PC-9 (cell line): ENCODE measurements at regions of chr1 and their contacts with region 1.

Region 1: DNA sequence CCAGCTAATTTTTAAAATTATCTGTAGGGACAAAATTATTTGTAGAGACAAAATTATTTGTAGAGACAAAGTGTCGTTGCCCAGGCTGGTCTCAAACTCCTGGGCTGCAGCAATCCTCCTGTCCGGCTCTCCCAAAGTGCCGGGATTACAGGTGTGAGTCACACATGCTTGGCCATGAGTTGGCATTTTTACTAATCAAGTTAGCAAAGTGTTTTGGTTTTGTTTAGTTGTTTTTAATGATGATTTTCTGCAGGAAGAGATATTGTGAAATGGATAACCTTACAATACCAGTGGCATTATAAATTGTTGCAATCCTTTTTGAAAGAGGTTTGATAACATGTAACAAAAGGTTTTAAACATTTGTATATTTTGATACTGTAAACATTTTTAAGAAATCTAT is 65.3 kb upstream of the MAGI3 start:
- DNase-seq: peak; percentile 56 to 92
- H3K4me3 ChIP-seq: 0 out of 2 replicates have a peak overlapping the region, but pooled peaks have one; percentile 4
- H3K27ac ChIP-seq: peak overlapping the region; percentile 88
- H3K4me1 ChIP-seq: peaks cover 54% of the 10 kb centered on the region
- H3K27me3 ChIP-seq: no peaks in the 10 kb centered on the region
- CTCF ChIP-seq: no peak

Region 2: DNA sequence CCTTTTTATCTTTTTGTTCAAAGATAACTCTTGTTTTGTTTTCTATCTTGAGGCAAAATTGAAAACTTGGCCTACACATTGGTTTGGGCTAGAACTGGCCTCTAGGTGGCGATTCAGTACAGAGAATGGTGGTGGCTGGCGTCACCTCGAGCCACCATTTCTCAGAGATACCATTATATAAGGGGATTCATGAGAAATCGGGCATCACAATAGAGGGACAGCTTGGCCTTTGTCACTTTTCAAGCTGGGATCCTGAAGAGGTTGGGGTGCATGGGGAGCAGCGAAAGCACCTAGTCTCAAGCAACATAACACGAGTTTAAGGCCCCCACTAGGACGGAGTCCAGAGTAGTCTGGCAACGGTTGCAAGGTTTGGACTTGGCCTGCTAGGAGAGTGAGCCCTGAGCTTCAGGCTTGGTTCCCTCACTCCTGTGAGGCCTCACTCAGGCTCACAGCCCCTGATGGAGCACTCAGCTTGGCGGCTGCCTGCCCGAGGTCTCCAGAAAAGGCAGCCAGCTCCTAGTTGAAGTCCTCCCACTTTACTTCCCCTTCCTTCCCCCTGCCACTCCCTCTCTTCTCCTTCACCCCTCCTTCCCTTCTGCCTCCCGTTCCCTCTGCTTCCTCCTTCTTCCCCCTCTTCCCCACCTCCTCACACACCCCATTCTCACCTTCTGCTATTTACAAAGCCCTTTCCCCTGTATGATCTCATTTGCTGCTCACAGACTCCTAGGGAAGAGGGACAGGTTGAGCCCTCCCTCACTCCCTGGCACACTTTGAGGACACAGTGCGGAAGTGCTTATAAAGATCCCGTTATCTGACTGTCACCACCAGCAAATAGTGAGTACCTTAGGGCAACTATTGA is 184.2 kb before region 1 on chr1:
- CTCF ChIA-PET with region 1: no interaction called
- POLR2A ChIA-PET with region 1: interaction called, 4 read pairs
- intact Hi-C with region 1: loop called (anchors 5 kb)
- DNase-seq: peak; percentile 58 to 61
- H3K4me3 ChIP-seq: no peak overlapping the region
- H3K27ac ChIP-seq: peak overlapping the region; percentile 31; the same call in 1 of the 2 replicates
- H3K4me1 ChIP-seq: peaks cover 16% of the 10 kb centered on the region
- H3K27me3 ChIP-seq: no peaks in the 10 kb centered on the region
- CTCF ChIP-seq: peak; percentile 99

Region 3: DNA sequence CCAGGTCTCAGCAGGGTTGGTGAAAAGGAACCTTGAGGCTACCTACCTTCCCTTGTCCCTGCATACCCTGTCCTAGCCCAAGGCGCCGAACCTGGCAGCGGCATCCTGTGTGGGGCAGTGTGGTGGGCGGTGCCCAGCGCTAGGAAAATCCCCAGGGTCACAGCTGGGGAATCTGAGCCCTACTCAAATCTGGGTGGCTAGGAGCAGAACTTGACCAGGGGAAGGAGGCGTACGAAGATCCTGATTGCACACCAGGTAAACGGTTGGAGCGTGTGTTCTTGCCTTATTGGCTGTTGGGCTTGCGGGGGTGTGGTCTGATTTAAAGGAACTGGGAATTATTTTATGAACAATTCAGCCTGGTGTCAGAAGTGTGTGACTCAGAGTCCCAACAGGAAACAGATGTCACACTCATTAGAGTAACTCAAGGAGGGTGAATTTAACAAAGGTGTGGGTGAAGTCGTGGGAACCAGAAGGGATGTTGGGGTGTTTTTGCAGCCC is 133.4 kb before region 1 on chr1:
- CTCF ChIA-PET with region 1: no interaction called
- POLR2A ChIA-PET with region 1: no interaction called
- intact Hi-C with region 1: loop called (anchors 10 kb)
- DNase-seq: peak; percentile 78 to 99
- H3K4me3 ChIP-seq: peak overlapping the region; percentile 48
- H3K27ac ChIP-seq: peak overlapping the region; percentile 86
- H3K4me1 ChIP-seq: peaks cover 25% of the 10 kb centered on the region
- H3K27me3 ChIP-seq: no peaks in the 10 kb centered on the region
- CTCF ChIP-seq: no peak

Region 4: DNA sequence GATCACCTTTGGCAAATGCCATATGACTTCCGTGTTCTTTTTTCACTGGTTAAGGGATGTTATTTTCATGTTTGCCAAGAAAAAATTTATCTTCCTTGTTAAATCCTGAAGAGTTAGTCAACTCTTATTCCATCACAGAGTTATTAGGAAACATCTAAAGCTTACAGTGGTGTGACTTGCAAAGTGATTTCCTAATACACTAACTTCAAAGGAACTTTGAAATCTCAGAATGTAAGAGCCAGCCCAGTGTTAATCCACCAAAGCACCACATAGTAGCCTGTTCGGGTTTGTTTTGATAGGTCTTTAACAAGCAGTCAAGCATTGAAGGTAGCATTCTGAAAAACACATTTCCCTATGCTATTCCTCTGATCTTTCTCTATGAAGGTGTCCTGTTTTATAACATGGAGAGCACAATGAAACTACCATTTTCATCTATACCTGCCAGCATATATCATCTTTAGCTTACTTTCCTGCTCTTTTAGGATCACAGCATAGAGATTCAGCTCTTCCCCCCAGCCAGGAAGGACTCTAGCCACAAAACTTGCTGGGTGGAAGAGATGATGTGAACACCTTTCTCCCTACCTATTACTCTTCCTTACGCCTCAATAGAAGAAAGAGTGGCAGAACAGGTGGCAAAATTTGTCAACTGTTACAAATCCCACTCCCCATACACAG is 17.1 kb before region 1 on chr1:
- CTCF ChIA-PET with region 1: no interaction called
- POLR2A ChIA-PET with region 1: no interaction called
- intact Hi-C with region 1: loop called (anchors 2 kb)
- DNase-seq: peak; percentile 10 to 99
- H3K4me3 ChIP-seq: peak overlapping the region; percentile 25; the same call in 1 of the 2 replicates
- H3K27ac ChIP-seq: peak overlapping the region; percentile 95
- H3K4me1 ChIP-seq: peaks cover 27% of the 10 kb centered on the region
- H3K27me3 ChIP-seq: no peaks in the 10 kb centered on the region
- CTCF ChIP-seq: no peak

Region 5: DNA sequence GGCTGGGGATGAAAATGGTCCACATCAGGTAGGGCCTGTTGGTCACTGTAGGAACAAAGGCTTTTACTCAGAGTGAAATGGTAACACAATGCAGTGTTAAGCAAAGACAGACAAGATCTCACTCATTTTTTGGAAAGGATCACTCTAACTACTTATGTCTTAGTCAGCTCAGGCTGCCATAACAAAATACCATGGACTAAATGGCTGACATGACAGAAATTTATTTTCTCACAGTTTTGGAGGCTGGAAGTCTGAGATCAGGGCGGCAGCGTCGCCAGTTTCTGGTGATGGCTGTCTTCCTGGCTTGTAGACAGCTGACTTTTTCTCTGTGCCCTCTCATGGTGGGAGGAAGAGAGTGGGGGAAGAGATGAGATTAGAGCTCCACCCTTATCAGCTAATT is 55.0 kb after region 1 on chr1:
- CTCF ChIA-PET with region 1: no interaction called
- POLR2A ChIA-PET with region 1: no interaction called
- intact Hi-C with region 1: no loop called
- DNase-seq: no peak
- H3K4me3 ChIP-seq: no peak overlapping the region
- H3K27ac ChIP-seq: no peak overlapping the region
- H3K4me1 ChIP-seq: no peaks in the 10 kb centered on the region
- H3K27me3 ChIP-seq: no peaks in the 10 kb centered on the region
- CTCF ChIP-seq: no peak